AG04449 (cell line): ENCODE measurements at regions of chr5 and their contacts with region 1.

Region 1: GRCh38 chr5:171342362-171343111 is 33.5 kb downstream of the TLX3 start:
- DNase-seq: peak; percentile 7
- H3K4me3 ChIP-seq: no peak overlapping the region
- CTCF ChIP-seq: peak; percentile 67

Region 2: GRCh38 chr5:170809551-170809950 is 533.0 kb before region 1 on chr5:
- CTCF ChIA-PET with region 1: interaction called, 69 read pairs
- POLR2A ChIA-PET with region 1: no interaction called
- DNase-seq: no peak
- H3K4me3 ChIP-seq: no peak overlapping the region
- CTCF ChIP-seq: peak; percentile 54

Region 3: DNA sequence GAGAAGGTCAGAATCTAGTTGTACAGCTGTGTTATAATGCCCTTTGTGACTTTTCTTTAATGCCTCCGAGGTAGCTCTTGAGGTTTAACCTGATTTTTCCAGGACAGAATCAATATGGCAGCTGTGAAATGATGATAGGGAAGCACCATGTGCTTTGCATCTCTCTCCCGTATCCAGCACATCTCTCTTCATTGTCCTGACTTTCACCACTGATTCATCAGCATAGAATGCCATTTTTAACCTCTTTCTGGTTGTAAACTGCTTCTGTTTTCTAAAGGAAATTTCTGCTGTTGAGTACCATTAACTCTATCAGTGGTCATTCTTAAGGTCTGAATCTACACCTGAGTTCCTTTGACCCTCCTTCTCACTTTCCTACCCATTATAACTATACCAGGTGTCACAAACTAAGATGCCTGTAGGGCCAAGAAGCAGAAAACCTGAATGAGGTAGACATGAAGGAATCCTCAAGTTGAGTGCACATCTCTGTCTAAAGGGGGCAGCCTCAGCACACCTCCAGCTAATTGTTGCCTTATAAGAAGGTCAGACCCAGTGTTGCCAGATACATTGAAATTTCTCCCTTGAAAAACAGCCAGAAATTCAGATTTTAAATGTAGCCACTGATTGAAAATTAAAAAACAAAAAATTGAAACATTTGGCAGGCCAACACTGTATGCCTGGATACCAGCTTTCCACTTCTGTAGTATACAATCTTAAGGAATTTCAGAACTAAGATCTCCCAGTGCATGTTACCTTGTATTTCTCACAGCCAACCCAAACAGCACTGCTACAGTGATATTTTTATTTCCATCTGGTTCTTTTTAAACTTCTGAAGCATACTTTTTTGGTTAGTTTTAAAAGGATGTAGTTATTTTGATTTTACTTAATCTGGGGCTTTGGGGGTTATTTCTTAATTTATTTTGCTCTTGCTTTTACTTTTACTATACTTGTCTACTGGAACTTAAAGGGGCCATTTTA is 69.3 kb before region 1 on chr5:
- CTCF ChIA-PET with region 1: interaction called, 13 read pairs
- POLR2A ChIA-PET with region 1: no interaction called
- DNase-seq: no peak
- H3K4me3 ChIP-seq: no peak overlapping the region
- CTCF ChIP-seq: peak; percentile 28

Region 4: DNA sequence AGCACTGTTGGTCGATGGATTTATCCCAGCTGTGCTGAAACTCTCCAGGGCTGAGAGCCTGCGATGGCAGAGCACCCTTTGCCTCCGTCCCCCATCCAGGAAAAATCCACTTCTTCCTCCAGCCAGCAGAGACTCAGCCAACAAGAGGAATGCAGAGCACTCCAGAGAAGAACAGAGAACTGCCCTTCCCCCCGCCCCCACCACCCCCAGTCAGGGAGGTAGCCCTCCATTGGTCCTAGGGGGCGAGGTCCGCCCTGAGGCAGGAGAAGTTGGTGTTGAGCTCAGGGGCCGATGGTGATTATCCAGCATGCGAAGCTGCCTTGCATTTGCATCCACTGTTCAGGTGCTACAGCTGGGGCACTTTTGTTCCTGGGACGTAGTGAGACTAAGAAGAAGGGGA is 24.5 kb before region 1 on chr5:
- CTCF ChIA-PET with region 1: interaction called, 14 read pairs
- POLR2A ChIA-PET with region 1: no interaction called
- DNase-seq: no peak
- H3K4me3 ChIP-seq: no peak overlapping the region
- CTCF ChIP-seq: no peak